Activated T-helper 1 cell treated with anti-CD3 and anti-CD28 coated beads, Interleukin-12 subunit alpha, Interleukin-12 subunit beta, Interleukin-2, Interleukin-4 antibody, amounts not matched to agents 30 ng/mL and 10 ng/mL and 1 ng/mL, durations not matched to agents 14 hours and 24 hours and 36 hours (primary cell): ENCODE measurements at regions of chr1 and their contacts with region 1.

Region 1: DNA sequence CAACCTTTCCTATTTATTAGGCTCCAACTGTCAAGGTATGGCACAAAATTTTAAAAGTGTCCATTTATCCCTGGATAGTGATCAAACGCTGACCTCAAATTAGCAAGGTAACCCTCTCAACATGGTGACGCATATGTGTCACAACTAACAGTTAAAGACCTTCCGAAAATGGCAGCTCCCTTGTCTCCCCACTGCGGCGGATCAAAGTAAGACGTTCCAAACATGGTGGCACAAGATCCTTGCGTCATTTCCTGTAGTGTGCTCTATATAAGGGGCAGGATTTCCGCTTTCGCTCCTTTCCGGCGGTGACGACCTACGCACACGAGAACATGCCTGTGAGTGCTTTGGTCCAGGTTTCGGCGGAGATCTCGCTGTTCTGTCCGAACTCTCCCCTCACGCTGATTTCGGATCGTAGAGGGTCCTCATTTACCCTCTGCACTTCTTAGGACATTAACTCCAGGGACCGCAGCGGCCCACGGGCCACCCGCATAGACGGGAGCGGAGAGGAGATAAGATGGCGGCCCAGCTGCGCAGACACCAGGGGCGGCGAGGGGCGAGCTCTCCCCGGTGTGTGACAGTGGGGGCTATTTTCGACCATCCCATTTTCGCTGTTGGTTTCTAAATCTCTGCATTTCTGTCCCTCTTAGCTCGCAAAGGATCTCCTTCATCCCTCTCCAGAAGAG is at the start of gene RPS27:
- DNase-seq: peak; percentile 86
- H3K4me3 Mint-ChIP-seq: peak within 1 kb of the TSS; percentile 94
- H3K27ac Mint-ChIP-seq: peak within 1 kb of the TSS; percentile 94
- H3K4me1 Mint-ChIP-seq: peaks cover 51% of the 10 kb centered on the region
- H3K27me3 Mint-ChIP-seq: peaks cover 1% of the 10 kb centered on the region
- total RNA-seq, gene RPS27: 1,226 and 1,349 TPM in 2 replicates

Region 2: GRCh38 chr1:153670859-153671627 is 319.6 kb before region 1 on chr1 and contains the start of gene ILF2:
- intact Hi-C with region 1: loop called (anchors 1 kb)
- DNase-seq: peak; percentile 96
- H3K4me3 Mint-ChIP-seq: no peak within 1 kb of the TSS
- H3K27ac Mint-ChIP-seq: peak within 1 kb of the TSS; percentile 56
- H3K4me1 Mint-ChIP-seq: peaks cover 29% of the 10 kb centered on the region
- H3K27me3 Mint-ChIP-seq: no peaks in the 10 kb centered on the region
- total RNA-seq, gene ILF2: 354 and 366 TPM in 2 replicates

Region 3: DNA sequence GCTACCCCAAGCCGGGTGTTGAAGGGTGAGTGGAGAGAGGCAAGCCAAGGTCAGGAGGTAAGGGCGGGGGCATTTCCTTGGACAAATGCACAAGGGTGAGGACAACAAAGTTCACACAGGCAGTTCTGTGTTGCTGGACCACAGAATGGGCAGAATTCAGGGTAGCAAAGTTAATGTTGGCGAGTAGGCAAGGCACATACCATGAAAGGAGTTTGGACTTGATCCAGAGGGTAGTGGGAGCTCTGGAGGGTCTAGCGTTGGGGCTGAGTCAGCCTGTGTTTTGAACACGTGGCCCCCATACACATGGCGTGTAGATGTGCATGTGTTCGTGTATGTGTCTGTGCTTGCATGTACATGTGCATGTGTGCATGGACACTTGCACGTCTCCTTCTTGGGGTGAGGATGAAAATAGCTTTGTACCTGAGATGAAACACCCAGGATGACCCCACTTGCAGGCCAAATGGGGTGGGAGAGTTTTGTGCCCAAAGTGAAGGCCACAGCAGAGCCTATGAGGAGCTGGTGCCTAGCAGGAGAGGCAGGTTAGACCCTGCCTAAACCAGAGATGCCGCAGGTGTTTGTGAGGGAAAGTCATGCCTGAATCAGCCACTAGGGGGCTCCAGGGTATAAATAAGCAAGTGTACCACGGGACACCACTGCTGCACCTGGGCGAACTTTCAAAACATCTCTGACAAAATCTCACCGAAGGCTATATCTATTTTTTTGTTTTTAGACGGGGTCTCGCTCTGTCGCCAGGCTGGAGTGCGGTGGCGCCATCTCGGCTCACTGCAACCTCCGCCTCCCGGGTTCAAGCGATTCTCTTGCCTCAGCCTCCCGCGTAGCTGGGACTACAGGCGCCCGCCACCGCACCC is 193.6 kb before region 1 on chr1:
- intact Hi-C with region 1: loop called (anchors 1 kb)
- DNase-seq: peak; percentile 69
- H3K4me3 Mint-ChIP-seq: no peak overlapping the region
- H3K27ac Mint-ChIP-seq: peak overlapping the region; percentile 31
- H3K4me1 Mint-ChIP-seq: peaks cover 17% of the 10 kb centered on the region
- H3K27me3 Mint-ChIP-seq: no peaks in the 10 kb centered on the region

Region 4: GRCh38 chr1:153946622-153947241 is 43.9 kb before region 1 on chr1 and contains the start of gene DENND4B:
- intact Hi-C with region 1: loop called (anchors 1 kb)
- DNase-seq: peak; percentile 74
- H3K4me3 Mint-ChIP-seq: peak within 1 kb of the TSS; percentile 88
- H3K27ac Mint-ChIP-seq: peak within 1 kb of the TSS; percentile 97
- H3K4me1 Mint-ChIP-seq: peaks cover 35% of the 10 kb centered on the region
- H3K27me3 Mint-ChIP-seq: no peaks in the 10 kb centered on the region
- total RNA-seq, gene DENND4B: 128 and 133 TPM in 2 replicates

Region 5: DNA sequence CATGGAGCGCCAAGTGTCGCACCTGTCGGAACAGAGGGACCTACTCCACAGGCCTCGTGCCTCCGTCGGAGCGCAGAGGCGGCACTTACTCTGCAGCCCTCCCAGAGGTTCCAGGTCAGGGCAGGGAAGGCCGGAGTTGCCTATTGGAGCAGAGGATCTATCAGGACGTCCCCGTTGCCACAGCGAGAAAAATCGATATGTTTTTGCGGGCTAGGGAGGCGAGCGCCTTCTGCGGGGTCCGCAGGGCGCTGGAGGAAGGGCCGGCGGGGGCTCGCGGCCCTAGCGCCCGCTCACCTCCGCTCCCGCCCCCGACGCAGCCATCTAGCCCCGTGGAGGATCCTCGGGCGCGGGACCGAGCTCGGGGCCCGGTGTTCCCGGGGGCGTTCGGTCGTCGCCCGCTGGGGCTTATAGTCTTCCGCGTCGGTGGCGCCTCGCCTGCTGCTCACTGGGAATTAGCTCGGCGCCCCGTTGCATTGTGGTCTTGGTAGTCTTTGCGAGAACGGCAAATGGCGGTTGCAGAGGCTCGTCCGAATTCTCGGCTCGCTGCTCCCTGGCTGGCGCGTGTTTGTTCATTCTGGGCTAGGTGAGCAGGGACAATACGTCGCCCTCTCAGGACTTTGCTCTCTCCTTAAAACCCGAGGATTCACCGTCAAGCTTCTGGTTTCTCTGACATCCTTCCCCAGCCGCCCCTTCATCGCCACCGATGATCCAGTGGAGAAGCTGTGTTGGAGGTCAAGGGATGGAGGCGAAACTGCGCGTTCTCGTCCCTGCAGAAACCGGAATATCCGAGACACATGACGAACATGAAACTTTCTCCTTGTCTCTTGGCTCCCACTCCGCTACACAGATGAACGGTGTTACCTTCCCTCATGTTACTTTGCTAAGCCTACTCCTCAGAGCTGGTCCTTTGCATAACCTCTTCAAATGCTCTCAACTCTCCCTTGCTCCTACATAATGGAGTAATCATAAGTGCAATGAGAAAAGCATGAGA is 13.1 kb before region 1 on chr1 and contains the start of gene JTB:
- intact Hi-C with region 1: loop called (anchors 1 kb)
- DNase-seq: peak; percentile 80
- H3K4me3 Mint-ChIP-seq: peak within 1 kb of the TSS; percentile 94
- H3K27ac Mint-ChIP-seq: peak within 1 kb of the TSS; percentile 95
- H3K4me1 Mint-ChIP-seq: peaks cover 33% of the 10 kb centered on the region
- H3K27me3 Mint-ChIP-seq: no peaks in the 10 kb centered on the region
- total RNA-seq, gene JTB: 198 and 213 TPM in 2 replicates

Region 6: DNA sequence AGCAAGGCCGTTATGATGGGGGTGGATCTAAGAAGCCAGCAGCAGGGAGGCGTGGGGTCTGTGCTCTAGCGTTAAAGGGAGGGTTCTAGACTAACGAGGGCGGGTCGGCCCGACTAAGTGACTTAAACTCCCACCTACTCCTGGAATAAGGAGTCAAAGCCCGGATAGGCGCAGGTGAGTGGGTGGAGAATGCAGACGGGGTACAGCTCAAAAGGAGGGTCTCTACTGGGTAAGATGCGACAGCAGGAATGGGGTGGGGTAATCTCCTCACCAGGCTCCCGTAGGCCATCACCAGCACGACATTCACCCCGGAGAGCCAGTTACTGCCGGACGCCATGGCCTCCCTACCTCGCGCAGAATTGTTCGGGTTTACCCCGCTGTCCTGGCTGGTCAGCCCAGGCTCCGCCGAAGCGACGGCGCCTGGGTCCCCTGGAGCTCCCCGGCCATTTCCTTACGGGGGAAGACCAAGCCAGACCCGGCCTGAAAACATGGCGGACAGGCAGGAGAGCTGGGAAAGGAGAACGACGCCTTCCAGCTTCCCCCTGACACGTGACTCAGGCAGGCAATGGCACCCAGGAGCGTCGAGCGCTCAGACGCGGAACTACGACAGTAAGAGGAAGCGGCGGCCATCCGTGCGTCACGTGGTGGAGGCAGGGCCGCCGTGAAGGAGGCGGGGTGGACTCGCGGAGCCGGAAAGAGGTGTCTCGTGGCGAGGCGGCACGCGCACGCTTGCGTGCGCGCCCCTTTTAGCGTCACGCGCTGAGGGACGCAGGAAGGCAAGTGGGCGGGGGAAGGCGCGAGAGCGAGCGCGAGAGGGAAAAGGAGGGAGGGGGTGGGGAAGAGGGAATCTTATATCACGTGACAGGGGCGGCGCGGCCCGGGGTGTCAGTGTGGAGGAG is 229.7 kb after region 1 on chr1 and contains the start of gene UBAP2L:
- intact Hi-C with region 1: loop called (anchors 1 kb)
- DNase-seq: peak; percentile 99
- H3K4me3 Mint-ChIP-seq: peak within 1 kb of the TSS; percentile 97
- H3K27ac Mint-ChIP-seq: peak within 1 kb of the TSS; percentile 99
- H3K4me1 Mint-ChIP-seq: peaks cover 62% of the 10 kb centered on the region
- H3K27me3 Mint-ChIP-seq: no peaks in the 10 kb centered on the region
- total RNA-seq, gene UBAP2L: 258 and 284 TPM in 2 replicates